Astrocyte of the cerebellum (primary cell): ENCODE measurements at regions of chrX and their contacts with region 1.

Region 1: GRCh38 chrX:10833299-10834169 is 213.1 kb upstream of the MID1 start:
- DNase-seq: no peak
- H3K4me3 ChIP-seq: peak overlapping the region; percentile 13
- CTCF ChIP-seq: no peak

Region 2: GRCh38 chrX:10769195-10769594 is 64.3 kb before region 1 on chrX:
- in situ Hi-C with region 1: no loop called
- DNase-seq: no peak
- H3K4me3 ChIP-seq: no peak overlapping the region
- CTCF ChIP-seq: peak; percentile 35

Region 3: DNA sequence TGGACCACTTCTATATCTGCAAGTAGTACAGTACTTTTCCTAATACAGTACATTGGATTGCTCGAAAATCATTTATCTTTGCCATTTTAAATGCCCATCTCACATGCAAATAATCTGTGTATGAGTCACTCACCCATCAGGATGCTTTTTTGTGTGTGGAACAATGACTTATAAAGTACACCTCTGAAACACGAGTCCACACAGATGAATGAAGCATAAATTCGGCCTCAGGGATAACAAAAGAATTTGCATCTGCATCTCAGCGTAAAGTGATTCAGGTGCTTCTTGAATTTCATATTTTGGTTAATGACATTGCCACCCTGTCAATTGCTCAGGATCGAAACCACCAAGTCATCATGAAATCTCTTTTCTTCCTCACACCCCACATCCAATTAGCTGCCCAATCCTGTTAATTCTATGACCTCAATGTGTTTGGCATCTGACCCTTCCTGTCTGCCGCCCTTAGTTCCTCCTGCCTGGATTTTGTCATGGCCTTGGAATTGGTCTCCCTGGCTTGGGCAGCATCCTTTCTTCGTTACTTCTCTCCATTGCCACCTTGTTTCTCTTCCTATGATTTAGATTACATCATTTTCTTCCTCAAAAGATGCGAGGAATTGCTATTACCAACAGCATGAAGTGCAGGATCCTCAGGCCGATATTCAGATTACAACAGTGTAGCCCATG is 51.5 kb before region 1 on chrX:
- in situ Hi-C with region 1: loop called (anchors 5 kb)
- DNase-seq: no peak
- H3K4me3 ChIP-seq: no peak overlapping the region
- CTCF ChIP-seq: no peak